GM12878 (cell line): ENCODE measurements at regions of chr11 and their contacts with region 1.

Region 1: DNA sequence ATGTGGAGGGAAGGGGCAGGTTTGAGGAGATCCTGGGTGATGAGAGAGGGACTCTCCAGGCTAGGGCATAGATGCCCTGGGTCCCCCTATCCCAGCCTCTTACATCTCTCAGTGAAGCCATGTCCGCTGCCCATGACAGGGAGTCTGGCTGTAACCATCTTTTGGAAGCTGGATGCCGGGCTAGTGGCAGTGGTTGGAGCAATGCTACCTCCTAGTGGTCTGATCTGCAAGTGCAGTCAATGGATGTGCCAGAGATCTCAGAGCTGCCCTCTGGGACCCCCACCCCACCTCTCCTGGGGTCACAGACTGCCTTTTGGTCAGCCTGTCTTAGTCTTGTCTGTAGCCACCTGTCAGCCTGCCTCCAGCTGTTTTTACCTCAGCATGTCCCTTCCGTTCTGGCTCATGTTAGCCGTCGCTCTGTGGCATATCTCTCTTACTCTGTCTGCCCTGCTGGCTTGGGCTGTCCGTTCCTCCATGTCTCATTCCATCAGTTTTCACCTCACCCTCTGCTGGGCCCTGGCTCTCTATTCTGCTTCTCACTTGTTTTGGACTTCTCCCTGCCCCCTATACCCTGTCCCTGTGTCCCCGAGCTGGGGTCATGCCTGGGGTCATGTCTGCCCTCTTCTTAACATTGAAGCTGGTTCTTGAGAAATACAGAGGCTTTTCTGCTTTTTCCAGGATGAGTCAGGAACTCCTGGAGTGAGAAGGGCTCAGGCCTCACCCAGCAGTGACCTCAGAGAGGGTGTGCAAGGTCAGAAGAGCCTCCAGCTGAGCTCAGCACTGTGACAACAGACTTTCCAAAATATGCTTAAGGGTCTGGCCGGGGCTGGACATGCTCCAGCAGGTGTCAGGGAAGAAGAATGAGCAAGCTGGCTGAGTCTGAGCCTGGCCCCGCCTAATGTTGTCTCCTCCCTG is 52.0 kb upstream of the THY1 start:
- DNase-seq: no peak
- ATAC-seq: peak; percentile 87
- H3K4me3 ChIP-seq: no peak overlapping the region
- H3K27ac ChIP-seq: no peak overlapping the region
- H3K4me1 ChIP-seq: no peaks in the 10 kb centered on the region
- H3K27me3 ChIP-seq: peaks cover 0 to 1% of the 10 kb centered on the region in 2 experiments; a peak in 1 of 4 replicates
- CTCF ChIP-seq: peak; percentile 92 to 95 (median 93); a peak in 5 of 6 replicates
- EP300 ChIP-seq: no peak
- POLR2A ChIP-seq: no peak
- RAD21 ChIP-seq: peak; percentile 81

Region 2: DNA sequence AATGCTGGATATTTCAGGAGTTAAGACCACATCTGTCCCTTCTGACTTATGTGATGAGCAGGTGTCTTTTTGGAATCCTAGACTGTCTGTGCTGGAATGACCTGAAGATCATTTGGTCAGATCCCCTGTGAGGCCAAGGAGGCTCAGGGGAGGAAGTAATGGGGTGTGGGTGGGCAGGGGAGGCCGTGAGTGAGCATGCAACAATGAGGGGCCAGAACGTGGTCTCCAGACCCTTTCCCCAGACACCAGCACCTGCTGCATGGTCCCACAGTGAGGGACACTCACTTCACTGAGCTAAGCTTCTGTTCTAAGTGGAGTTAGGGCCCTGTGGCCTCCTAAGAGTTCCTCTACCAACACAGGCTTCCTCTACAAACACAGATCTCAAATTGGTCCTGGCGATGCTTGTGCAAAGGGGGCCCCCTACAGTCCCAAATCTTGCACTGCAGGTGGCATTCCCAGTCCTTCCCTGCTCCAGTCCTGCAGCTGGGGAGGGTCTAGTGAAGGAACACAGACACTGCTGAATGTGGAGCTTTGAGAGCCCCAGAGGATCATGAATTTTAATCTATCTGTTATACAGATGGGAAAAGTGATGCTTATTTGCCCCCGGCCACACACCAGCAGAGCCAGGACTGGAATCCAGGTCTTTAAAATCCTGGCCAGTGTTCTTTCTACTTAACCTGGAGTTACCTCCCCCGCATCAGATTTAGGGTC is 100.9 kb before region 1 on chr11:
- CTCF ChIA-PET with region 1: interaction called, 10 read pairs
- POLR2A ChIA-PET with region 1: no interaction called
- RAD21 ChIA-PET with region 1: interaction called, 14 read pairs
- SMC1A ChIA-PET with region 1: interaction called, 3 read pairs
- in situ Hi-C with region 1: no loop called
- intact Hi-C with region 1: no loop called
- DNase-seq: no peak
- ATAC-seq: peak; percentile 51
- H3K4me3 ChIP-seq: no peak overlapping the region
- H3K27ac ChIP-seq: no peak overlapping the region
- H3K4me1 ChIP-seq: no peaks in the 10 kb centered on the region
- H3K27me3 ChIP-seq: peaks cover 0 to 3% of the 10 kb centered on the region in 2 experiments; a peak in 2 of 4 replicates
- CTCF ChIP-seq: peak; percentile 71 to 78 (median 76); a peak in 5 of 6 replicates
- EP300 ChIP-seq: no peak
- POLR2A ChIP-seq: no peak
- RAD21 ChIP-seq: peak; percentile 81

Region 3: DNA sequence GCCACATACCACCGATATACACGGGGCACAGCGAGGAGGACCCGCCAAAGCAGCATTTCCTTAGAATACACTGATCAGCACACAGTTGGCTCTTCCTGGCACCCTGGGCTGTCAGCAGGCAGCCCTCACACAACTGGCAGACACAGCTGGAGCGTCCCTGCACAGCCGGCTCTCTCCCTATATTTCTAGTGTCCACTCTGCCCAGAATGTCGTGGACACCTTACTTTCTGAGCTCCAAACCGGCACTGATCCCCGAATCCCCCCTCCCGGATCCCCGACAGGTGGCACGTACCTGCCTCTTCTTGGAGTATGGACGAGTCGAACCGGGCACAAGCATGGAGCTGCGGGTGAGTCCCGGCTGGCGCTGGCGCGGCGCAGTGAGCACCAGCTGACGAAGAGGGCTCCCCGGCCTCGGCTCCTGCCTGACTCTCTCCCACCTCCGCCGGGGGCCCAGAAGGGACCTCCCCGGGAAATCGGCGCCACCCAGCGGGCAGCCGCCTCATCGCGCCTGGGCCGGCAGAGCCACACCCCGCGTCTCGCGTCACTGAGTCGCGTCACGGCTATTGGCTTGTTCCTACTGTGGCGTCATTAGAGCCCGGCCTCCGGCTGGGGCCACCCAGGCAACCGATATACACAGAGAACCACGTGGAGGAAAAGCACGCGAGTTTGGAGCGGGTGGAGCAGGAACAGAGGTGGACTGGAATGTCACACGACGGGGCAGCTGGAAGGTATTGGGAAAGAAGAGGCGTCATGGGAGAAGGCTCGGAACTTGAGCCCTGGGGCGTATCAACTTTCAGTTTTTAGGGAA is 93.6 kb before region 1 on chr11 and contains the start of gene USP2:
- CTCF ChIA-PET with region 1: interaction called, 21 read pairs
- POLR2A ChIA-PET with region 1: no interaction called
- RAD21 ChIA-PET with region 1: interaction called, 14 read pairs
- SMC1A ChIA-PET with region 1: interaction called, 9 read pairs
- in situ Hi-C with region 1: no loop called
- intact Hi-C with region 1: no loop called
- DNase-seq: peak; percentile 48
- ATAC-seq: peak; percentile 99
- H3K4me3 ChIP-seq: peak within 1 kb of the TSS; percentile 40; the same call in 1 of the 2 replicates
- H3K27ac ChIP-seq: no peak within 1 kb of the TSS
- H3K4me1 ChIP-seq: 0 out of 2 replicates have a peak, but pooled peaks cover 3% of the 10 kb centered on the region
- H3K27me3 ChIP-seq: peaks cover 0 to 8% of the 10 kb centered on the region in 2 experiments; a peak in 3 of 4 replicates
- CTCF ChIP-seq: peak; percentile 83 to 88 (median 87)
- EP300 ChIP-seq: no peak
- POLR2A ChIP-seq: no peak
- RAD21 ChIP-seq: peak; percentile 28; the same call in 1 of the 2 replicates
- polyA plus RNA-seq, gene USP2: 0.04 TPM in 1 of 2 experiments, not detected in the other

Region 4: DNA sequence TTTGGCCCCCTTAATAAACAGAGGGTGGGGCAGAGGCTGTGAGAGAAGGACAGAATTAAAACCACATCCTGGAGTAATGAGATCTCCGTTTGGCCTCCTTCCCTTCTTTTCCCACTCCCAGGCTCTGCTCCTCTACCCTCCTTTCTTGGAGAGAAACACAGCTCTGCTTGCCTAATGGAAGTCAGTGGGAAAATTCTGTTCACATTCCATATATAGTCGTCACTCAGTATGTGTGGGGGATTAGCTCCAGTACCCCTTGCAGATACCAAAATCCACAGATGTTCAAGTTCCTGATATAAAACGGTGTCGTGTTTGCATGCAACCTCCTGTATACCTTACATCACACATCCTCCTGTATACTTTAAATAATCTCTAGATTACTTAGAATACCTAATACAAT is 14.4 kb before region 1 on chr11:
- CTCF ChIA-PET with region 1: interaction called, 10 read pairs
- POLR2A ChIA-PET with region 1: no interaction called
- RAD21 ChIA-PET with region 1: interaction called, 3 read pairs
- SMC1A ChIA-PET with region 1: interaction called, 4 read pairs
- in situ Hi-C with region 1: no loop called
- intact Hi-C with region 1: no loop called
- DNase-seq: no peak
- ATAC-seq: no peak
- H3K4me3 ChIP-seq: no peak overlapping the region
- H3K27ac ChIP-seq: no peak overlapping the region
- H3K4me1 ChIP-seq: no peaks in the 10 kb centered on the region
- H3K27me3 ChIP-seq: 0 out of 4 replicates have a peak, but pooled peaks cover 0 to 3% of the 10 kb centered on the region in 2 experiments
- CTCF ChIP-seq: no peak
- EP300 ChIP-seq: no peak
- POLR2A ChIP-seq: no peak
- RAD21 ChIP-seq: no peak

Region 5: GRCh38 chr11:119774172-119774763 is 299.3 kb after region 1 on chr11:
- CTCF ChIA-PET with region 1: no interaction called
- POLR2A ChIA-PET with region 1: no interaction called
- RAD21 ChIA-PET with region 1: no interaction called
- SMC1A ChIA-PET with region 1: no interaction called
- in situ Hi-C with region 1: no loop called
- intact Hi-C with region 1: no loop called
- DNase-seq: no peak
- ATAC-seq: no peak
- H3K4me3 ChIP-seq: no peak overlapping the region
- H3K27ac ChIP-seq: no peak overlapping the region
- H3K4me1 ChIP-seq: no peaks in the 10 kb centered on the region
- H3K27me3 ChIP-seq: no peaks in the 10 kb centered on the region
- CTCF ChIP-seq: no peak
- EP300 ChIP-seq: no peak
- POLR2A ChIP-seq: no peak
- RAD21 ChIP-seq: no peak